ENCODE measurements at regions of chr14 and their contacts with region 1.

Region 1: GRCh38 chr14:20609215-20610001 is 18.2 kb upstream of the RNASE12 start:
- DNase-seq: peak; percentile 77 to 86
- H3K4me3 ChIP-seq: peak overlapping the region; percentile 78
- H3K4me1 ChIP-seq: peaks cover 9% of the 10 kb centered on the region
- H3K27me3 ChIP-seq: no peaks in the 10 kb centered on the region

Region 2: DNA sequence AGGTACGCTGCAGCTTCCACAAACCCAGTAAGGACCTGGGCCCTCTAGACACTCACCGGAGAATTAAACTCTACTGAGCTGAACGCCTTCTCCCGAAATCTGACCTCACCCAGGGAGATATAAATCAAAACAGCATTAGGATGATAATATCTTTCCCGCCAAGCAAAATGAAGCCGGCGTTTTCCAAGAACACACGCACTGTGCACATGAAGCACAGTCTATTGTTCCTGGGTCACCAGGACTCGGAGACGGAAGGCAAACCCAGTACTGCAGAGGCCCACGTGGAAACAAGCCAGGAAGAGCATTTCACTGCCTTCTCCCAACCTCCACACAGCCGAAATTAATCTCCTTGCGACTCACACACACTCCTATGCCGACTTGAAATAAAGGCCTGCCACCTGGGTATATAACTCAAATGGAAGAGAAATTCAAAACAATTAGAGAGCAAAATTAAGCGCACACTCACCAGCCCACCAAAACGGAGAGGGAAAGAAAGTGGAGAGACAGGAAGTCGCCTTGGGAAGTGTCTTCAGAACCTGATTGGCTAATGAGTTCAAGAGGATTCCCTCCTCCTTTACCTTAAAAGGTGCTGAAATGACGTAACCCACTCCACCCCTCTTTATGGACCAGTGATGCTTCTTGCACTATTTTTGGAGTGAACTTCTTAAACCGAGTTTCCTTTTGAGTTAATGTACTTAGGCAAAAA is 276.5 kb before region 1 on chr14 and contains the start of gene CCNB1IP1:
- in situ Hi-C with region 1: loop called (anchors 10 kb)
- DNase-seq: peak; percentile 76 to 96
- H3K4me3 ChIP-seq: peak within 1 kb of the TSS; percentile 60
- H3K4me1 ChIP-seq: peaks cover 26% of the 10 kb centered on the region
- H3K27me3 ChIP-seq: no peaks in the 10 kb centered on the region

Region 3: DNA sequence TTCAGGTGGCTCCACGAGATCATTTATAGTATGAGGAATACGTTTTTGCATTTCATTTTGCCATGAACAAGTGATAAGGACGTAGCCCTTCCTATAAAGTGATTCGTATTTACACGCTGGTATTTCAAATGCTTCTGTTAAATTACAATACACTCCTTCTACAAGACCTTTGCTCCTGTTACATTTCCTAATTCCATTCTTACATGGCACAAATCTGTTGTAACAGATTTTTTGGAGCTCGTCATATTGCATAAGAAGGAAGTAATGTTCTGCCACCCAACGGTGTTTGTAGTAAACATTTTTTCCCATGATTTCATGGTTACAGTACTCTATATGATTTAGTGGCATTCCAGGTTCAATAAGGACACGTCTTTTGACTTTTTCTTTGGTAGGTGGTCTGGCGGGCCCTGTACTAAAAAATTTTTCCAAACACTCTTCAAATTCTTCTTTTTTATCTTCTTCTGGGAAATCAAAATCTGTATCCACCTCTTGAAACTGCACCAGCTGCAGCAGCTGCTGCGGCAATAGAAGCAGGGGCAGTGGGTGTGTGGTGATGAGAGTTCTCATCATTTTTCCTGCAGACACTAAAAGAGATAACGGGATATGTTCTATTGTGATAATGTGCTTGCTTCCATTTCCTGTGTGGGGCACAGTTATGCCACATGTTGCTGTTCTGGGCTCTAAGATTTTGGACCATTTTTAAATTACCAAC is 52.8 kb before region 1 on chr14:
- in situ Hi-C with region 1: no loop called
- DNase-seq: no peak
- H3K4me3 ChIP-seq: no peak overlapping the region
- H3K4me1 ChIP-seq: peaks cover 6% of the 10 kb centered on the region
- H3K27me3 ChIP-seq: peaks cover 5% of the 10 kb centered on the region; the same call in 1 of the 2 replicates

Measured in HAP-1 (cell line).